GM12878 (cell line): ENCODE measurements at regions of chr15 and their contacts with region 1.

Region 1: GRCh38 chr15:56245871-56246814 is 2.5 kb upstream of the RFX7 start:
- DNase-seq: peak; percentile 75
- ATAC-seq: peak; percentile 72
- H3K4me3 ChIP-seq: peak overlapping the region; percentile 68
- H3K27ac ChIP-seq: peak overlapping the region; percentile 91
- H3K4me1 ChIP-seq: peaks cover 7% of the 10 kb centered on the region
- H3K27me3 ChIP-seq: no peaks in the 10 kb centered on the region
- CTCF ChIP-seq: peak; percentile 100; a peak in 5 of 6 replicates
- EP300 ChIP-seq: no peak
- POLR2A ChIP-seq: peak; percentile 86
- RAD21 ChIP-seq: peak; percentile 95

Region 2: GRCh38 chr15:55993111-55993803 is 252.9 kb before region 1 on chr15 and contains the start of gene NEDD4:
- CTCF ChIA-PET with region 1: interaction called, 3 read pairs
- POLR2A ChIA-PET with region 1: no interaction called
- RAD21 ChIA-PET with region 1: no interaction called
- SMC1A ChIA-PET with region 1: no interaction called
- in situ Hi-C with region 1: no loop called
- intact Hi-C with region 1: loop called (anchors 10 kb)
- DNase-seq: peak; percentile 23
- ATAC-seq: peak; percentile 96
- H3K4me3 ChIP-seq: peak within 1 kb of the TSS; percentile 87
- H3K27ac ChIP-seq: peak within 1 kb of the TSS; percentile 55
- H3K4me1 ChIP-seq: 0 out of 2 replicates have a peak, but pooled peaks cover 3% of the 10 kb centered on the region
- H3K27me3 ChIP-seq: peaks cover 0 to 2% of the 10 kb centered on the region in 2 experiments; a peak in 2 of 4 replicates
- CTCF ChIP-seq: peak; percentile 48 to 70 (median 65); a peak in 5 of 6 replicates
- EP300 ChIP-seq: no peak
- POLR2A ChIP-seq: peak; percentile 68
- RAD21 ChIP-seq: 0 out of 2 replicates have a peak, but pooled peaks have one; percentile 16
- polyA plus RNA-seq, gene NEDD4: 1.8 TPM

Region 3: GRCh38 chr15:56098195-56098863 is 147.8 kb before region 1 on chr15:
- CTCF ChIA-PET with region 1: interaction called, 10 read pairs
- POLR2A ChIA-PET with region 1: no interaction called
- RAD21 ChIA-PET with region 1: no interaction called
- SMC1A ChIA-PET with region 1: no interaction called
- in situ Hi-C with region 1: no loop called
- intact Hi-C with region 1: loop called (anchors 10 kb)
- DNase-seq: no peak
- ATAC-seq: no peak
- H3K4me3 ChIP-seq: no peak overlapping the region
- H3K27ac ChIP-seq: no peak overlapping the region
- H3K4me1 ChIP-seq: no peaks in the 10 kb centered on the region
- H3K27me3 ChIP-seq: no peaks in the 10 kb centered on the region
- CTCF ChIP-seq: no peak
- EP300 ChIP-seq: no peak
- POLR2A ChIP-seq: no peak
- RAD21 ChIP-seq: no peak

Region 4: DNA sequence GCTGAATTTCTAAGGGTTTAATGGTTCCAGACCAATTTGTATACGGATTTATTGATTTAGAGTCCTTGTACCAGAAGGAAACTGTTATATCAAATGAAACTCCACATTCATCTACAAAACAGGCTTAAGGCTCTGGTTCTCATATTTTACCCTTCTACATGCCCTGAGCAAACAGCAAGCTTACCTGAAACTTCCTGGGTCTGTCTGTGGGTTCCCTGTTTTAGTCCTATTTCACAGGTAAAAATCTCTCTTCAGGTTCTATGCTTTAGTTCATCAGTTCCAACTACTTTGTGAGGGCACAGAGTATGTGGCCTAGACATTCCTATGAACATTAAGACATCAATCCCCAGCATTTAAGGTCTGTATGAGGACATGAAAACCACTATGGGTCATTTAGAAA is 60.2 kb before region 1 on chr15:
- CTCF ChIA-PET with region 1: interaction called, 3 read pairs
- POLR2A ChIA-PET with region 1: no interaction called
- RAD21 ChIA-PET with region 1: no interaction called
- SMC1A ChIA-PET with region 1: no interaction called
- in situ Hi-C with region 1: no loop called
- intact Hi-C with region 1: loop called (anchors 5 kb)
- DNase-seq: no peak
- ATAC-seq: peak; percentile 53
- H3K4me3 ChIP-seq: no peak overlapping the region
- H3K27ac ChIP-seq: peak overlapping the region; percentile 31; the same call in 1 of the 2 replicates
- H3K4me1 ChIP-seq: peaks cover 12% of the 10 kb centered on the region
- H3K27me3 ChIP-seq: no peaks in the 10 kb centered on the region
- CTCF ChIP-seq: no peak
- EP300 ChIP-seq: no peak
- POLR2A ChIP-seq: no peak
- RAD21 ChIP-seq: no peak

Region 5: GRCh38 chr15:56207092-56207491 is 39.1 kb before region 1 on chr15:
- CTCF ChIA-PET with region 1: interaction called, 18 read pairs
- POLR2A ChIA-PET with region 1: no interaction called
- RAD21 ChIA-PET with region 1: interaction called, 10 read pairs
- SMC1A ChIA-PET with region 1: interaction called, 7 read pairs
- in situ Hi-C with region 1: no loop called
- intact Hi-C with region 1: no loop called
- DNase-seq: peak; percentile 38
- ATAC-seq: peak; percentile 91
- H3K4me3 ChIP-seq: no peak overlapping the region
- H3K27ac ChIP-seq: peak overlapping the region; percentile 66; the same call in 1 of the 2 replicates
- H3K4me1 ChIP-seq: peaks cover 28% of the 10 kb centered on the region
- H3K27me3 ChIP-seq: no peaks in the 10 kb centered on the region
- CTCF ChIP-seq: no peak
- EP300 ChIP-seq: no peak
- POLR2A ChIP-seq: no peak
- RAD21 ChIP-seq: no peak

Region 6: DNA sequence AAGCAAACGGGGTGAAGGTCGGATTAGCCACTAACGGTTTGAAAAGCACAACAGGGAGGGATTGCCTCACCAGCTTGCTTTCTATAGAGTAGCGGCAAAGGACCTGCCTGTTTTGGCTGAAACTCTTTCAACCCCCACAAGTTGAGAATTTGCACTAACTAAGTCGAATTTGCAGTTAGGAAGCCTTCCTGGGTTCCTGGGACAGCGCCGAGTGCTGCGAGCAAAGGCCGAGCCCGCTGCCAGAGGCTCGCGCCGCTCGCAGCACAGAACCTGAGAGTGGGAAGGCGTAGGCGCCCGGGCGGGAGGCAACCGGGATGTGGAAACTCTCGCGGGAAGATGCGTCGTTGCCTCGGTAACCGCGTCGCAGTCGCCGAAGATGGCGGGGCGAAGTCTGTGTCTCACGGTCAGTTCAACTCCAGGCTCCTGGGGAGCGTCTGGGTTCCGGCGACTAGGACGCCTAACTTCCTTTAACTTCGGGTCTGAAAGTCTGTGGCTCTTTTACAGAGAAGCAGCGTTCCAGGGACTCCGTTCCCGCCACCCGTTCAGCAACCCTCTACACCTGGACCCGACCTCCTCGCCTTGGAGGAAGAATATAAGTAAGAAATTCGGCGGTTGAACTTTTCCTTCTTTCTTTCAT is 119.0 kb after region 1 on chr15 and contains the start of gene TEX9:
- CTCF ChIA-PET with region 1: interaction called, 4 read pairs
- POLR2A ChIA-PET with region 1: no interaction called
- RAD21 ChIA-PET with region 1: no interaction called
- SMC1A ChIA-PET with region 1: no interaction called
- in situ Hi-C with region 1: loop called (anchors 5 kb)
- intact Hi-C with region 1: loop called (anchors 2 kb)
- DNase-seq: peak; percentile 79
- ATAC-seq: peak; percentile 91
- H3K4me3 ChIP-seq: peak within 1 kb of the TSS; percentile 86
- H3K27ac ChIP-seq: peak within 1 kb of the TSS; percentile 95
- H3K4me1 ChIP-seq: no peaks in the 10 kb centered on the region
- H3K27me3 ChIP-seq: no peaks in the 10 kb centered on the region
- CTCF ChIP-seq: no peak
- EP300 ChIP-seq: no peak
- POLR2A ChIP-seq: peak; percentile 93
- RAD21 ChIP-seq: no peak
- polyA plus RNA-seq, gene TEX9: 69.6 to 74.3 TPM

Region 7: GRCh38 chr15:56411122-56411749 is 165.1 kb after region 1 on chr15:
- CTCF ChIA-PET with region 1: no interaction called
- POLR2A ChIA-PET with region 1: no interaction called
- RAD21 ChIA-PET with region 1: no interaction called
- SMC1A ChIA-PET with region 1: no interaction called
- in situ Hi-C with region 1: no loop called
- intact Hi-C with region 1: no loop called
- DNase-seq: peak; percentile 4
- ATAC-seq: peak; percentile 49
- H3K4me3 ChIP-seq: no peak overlapping the region
- H3K27ac ChIP-seq: 0 out of 2 replicates have a peak overlapping the region, but pooled peaks have one; percentile 31
- H3K4me1 ChIP-seq: peaks cover 3% of the 10 kb centered on the region; the same call in 1 of the 2 replicates
- H3K27me3 ChIP-seq: no peaks in the 10 kb centered on the region
- CTCF ChIP-seq: no peak
- EP300 ChIP-seq: no peak
- POLR2A ChIP-seq: no peak
- RAD21 ChIP-seq: no peak

Region 8: GRCh38 chr15:56428821-56429458 is 182.8 kb after region 1 on chr15:
- CTCF ChIA-PET with region 1: interaction called, 123 read pairs
- POLR2A ChIA-PET with region 1: no interaction called
- RAD21 ChIA-PET with region 1: interaction called, 16 read pairs
- SMC1A ChIA-PET with region 1: interaction called, 29 read pairs
- in situ Hi-C with region 1: loop called (anchors 5 kb)
- intact Hi-C with region 1: loop called (anchors 1 kb)
- DNase-seq: peak; percentile 7
- ATAC-seq: peak; percentile 73
- H3K4me3 ChIP-seq: no peak overlapping the region
- H3K27ac ChIP-seq: no peak overlapping the region
- H3K4me1 ChIP-seq: no peaks in the 10 kb centered on the region
- H3K27me3 ChIP-seq: no peaks in the 10 kb centered on the region
- CTCF ChIP-seq: peak; percentile 25 to 66 (median 44); a peak in 4 of 6 replicates
- EP300 ChIP-seq: no peak
- POLR2A ChIP-seq: no peak
- RAD21 ChIP-seq: peak; percentile 76